ENCODE measurements at regions of chr3 and their contacts with region 1.

Region 1: DNA sequence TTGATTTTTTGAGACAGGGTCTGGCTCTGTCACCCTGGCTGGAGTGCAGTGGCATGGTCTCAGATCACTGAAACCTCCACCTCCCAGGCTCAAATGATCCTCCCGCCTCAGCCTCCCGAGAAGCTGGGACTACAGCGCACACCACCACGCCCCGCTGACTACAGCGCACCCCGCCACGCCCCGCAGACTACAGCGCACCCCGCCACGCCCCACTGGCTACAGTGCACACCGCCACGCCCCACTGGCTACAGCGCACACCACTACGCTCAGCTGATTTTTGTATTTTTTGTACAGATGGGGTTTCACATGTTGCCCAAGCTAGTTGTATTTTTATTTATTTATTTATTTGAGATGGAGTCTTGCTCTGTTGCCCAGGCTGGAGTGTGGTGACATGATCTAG is 35.6 kb downstream of the SLC51A start:
- DNase-seq: no peak
- H3K4me3 ChIP-seq: no peak overlapping the region
- H3K4me3 Mint-ChIP-seq: no peak overlapping the region
- H3K27ac Mint-ChIP-seq: no peak overlapping the region
- H3K4me1 ChIP-seq: no peaks in the 10 kb centered on the region
- H3K4me1 Mint-ChIP-seq: no peaks in the 10 kb centered on the region
- H3K27me3 ChIP-seq: no peaks in the 10 kb centered on the region
- H3K27me3 Mint-ChIP-seq: no peaks in the 10 kb centered on the region
- CTCF ChIP-seq: no peak

Region 2: GRCh38 chr3:196440041-196440537 is 188.2 kb after region 1 on chr3:
- CTCF ChIA-PET with region 1: no interaction called
- POLR2A ChIA-PET with region 1: no interaction called
- intact Hi-C with region 1: loop called (anchors 10 kb)
- DNase-seq: no peak
- H3K4me3 ChIP-seq: no peak overlapping the region
- H3K4me3 Mint-ChIP-seq: no peak overlapping the region
- H3K27ac Mint-ChIP-seq: no peak overlapping the region
- H3K4me1 ChIP-seq: no peaks in the 10 kb centered on the region
- H3K4me1 Mint-ChIP-seq: no peaks in the 10 kb centered on the region
- H3K27me3 ChIP-seq: no peaks in the 10 kb centered on the region
- H3K27me3 Mint-ChIP-seq: no peaks in the 10 kb centered on the region
- CTCF ChIP-seq: no peak

Region 3: GRCh38 chr3:196518966-196519717 is 267.2 kb after region 1 on chr3:
- CTCF ChIA-PET with region 1: interaction called, 4 read pairs
- POLR2A ChIA-PET with region 1: no interaction called
- intact Hi-C with region 1: loop called (anchors 1 kb)
- DNase-seq: peak; percentile 63
- H3K4me3 ChIP-seq: no peak overlapping the region
- H3K4me3 Mint-ChIP-seq: no peak overlapping the region
- H3K27ac Mint-ChIP-seq: no peak overlapping the region
- H3K4me1 ChIP-seq: no peaks in the 10 kb centered on the region
- H3K4me1 Mint-ChIP-seq: no peaks in the 10 kb centered on the region
- H3K27me3 ChIP-seq: no peaks in the 10 kb centered on the region
- H3K27me3 Mint-ChIP-seq: no peaks in the 10 kb centered on the region
- CTCF ChIP-seq: peak; percentile 0 to 36

Measured in Caco-2 (cell line).